ENCODE measurements at regions of chr2 and their contacts with region 1.

Region 1: GRCh38 chr2:72150157-72150865 is 2.6 kb upstream of the CYP26B1 start:
- DNase-seq: peak; percentile 63 to 77
- ATAC-seq: peak; percentile 83

Region 2: GRCh38 chr2:71545572-71546274 is 604.6 kb before region 1 on chr2:
- intact Hi-C with region 1: loop called (anchors 5 to 10 kb)
- DNase-seq: peak; percentile 39 to 52
- ATAC-seq: peak; percentile 75

Region 3: GRCh38 chr2:71558300-71559051 is 591.8 kb before region 1 on chr2:
- intact Hi-C with region 1: loop called in 1 of 2 experiments (anchors 10 kb)
- DNase-seq: no peak
- ATAC-seq: no peak

Region 4: GRCh38 chr2:71609958-71610357 is 540.4 kb before region 1 on chr2:
- intact Hi-C with region 1: loop called in 1 of 2 experiments (anchors 5 kb)
- DNase-seq: no peak
- ATAC-seq: no peak

Region 5: GRCh38 chr2:71923887-71924533 is 226.3 kb before region 1 on chr2:
- intact Hi-C with region 1: loop called in 1 of 2 experiments (anchors 1 kb)
- DNase-seq: peak in 1 of 2 donors; percentile 74
- ATAC-seq: peak; percentile 66

Region 6: GRCh38 chr2:72579591-72580180 is 429.4 kb after region 1 on chr2:
- intact Hi-C with region 1: loop called in 1 of 2 experiments (anchors 10 kb)
- DNase-seq: no peak
- ATAC-seq: peak; percentile 60

Measured in left colon (tissue), 2 donors.